Activated CD4-positive, alpha-beta T cell treated with anti-CD3 and anti-CD28 coated beads, Interleukin-2, amount 10 ng/mL, durations not matched to agents 24 days and 14 days (primary cell): ENCODE measurements at regions of chr6 and their contacts with region 1.

Region 1: DNA sequence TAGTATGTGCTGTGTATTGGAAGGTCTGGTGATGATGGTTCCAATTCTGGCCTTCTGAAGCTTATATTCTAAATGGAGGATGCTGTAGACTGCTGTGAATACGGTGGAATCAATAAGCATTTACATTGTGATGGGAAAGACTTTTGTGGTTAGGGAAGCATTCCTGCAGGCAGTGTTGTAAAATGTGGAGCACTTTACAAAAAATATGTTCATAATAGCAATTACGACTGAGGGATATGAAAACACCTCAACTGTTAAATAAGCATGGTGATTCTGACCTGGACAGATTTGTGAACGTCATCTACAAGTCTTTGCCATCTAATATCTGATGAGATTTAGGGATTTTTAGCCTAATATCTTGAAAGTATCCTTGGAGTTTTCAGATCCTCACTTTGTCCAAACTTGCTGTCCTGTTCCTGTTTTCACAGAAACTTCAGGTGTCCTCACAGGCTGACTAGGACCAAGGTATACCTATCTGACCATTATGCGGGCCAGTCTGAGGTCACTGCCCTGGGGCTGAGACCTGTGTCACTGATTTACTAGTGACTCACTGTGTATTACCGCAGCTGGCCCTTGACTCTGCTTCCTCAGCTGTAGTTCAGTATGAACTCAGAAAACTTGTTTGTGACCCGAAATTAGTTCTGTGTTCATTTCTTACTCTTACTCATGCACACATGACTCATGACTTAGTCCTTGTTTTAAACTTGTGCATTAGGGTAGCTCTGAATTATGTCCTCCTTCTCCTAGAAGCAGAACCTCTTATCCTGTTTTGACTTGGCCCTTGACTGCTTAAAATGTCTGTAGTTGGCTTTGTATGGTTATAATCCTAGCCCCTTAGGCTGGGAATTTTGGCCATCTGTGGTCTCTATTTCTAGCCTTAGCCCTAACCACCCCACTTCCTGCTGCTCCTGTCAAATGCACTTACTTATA is 343.0 kb downstream of the CDKAL1 start:
- DNase-seq: peak; percentile 60
- H3K4me3 Mint-ChIP-seq: no peak overlapping the region
- H3K27ac Mint-ChIP-seq: peak overlapping the region; percentile 42
- H3K4me1 Mint-ChIP-seq: peaks cover 13% of the 10 kb centered on the region
- H3K27me3 Mint-ChIP-seq: no peaks in the 10 kb centered on the region

Region 2: DNA sequence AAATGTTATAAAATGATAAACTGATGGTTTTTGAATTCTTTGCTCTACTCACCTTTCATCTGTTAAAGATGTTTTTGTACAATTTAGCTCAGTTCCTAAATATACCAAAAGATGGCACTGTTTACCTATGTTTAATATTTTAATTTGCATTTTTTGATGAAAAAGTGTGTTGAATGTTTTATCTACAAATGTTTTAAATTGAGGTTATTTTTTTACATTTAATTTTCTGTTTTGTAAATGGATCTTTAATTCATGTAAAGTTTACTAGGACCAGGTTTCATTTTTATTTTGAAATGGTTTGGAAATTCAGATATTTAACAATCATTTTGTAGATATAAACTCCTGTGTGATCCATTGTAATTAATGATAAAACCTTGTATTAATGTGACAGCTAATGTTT is 313.0 kb before region 1 on chr6:
- intact Hi-C with region 1: loop called (anchors 5 kb)
- DNase-seq: no peak
- H3K4me3 Mint-ChIP-seq: no peak overlapping the region
- H3K27ac Mint-ChIP-seq: no peak overlapping the region
- H3K4me1 Mint-ChIP-seq: peaks cover 8% of the 10 kb centered on the region
- H3K27me3 Mint-ChIP-seq: no peaks in the 10 kb centered on the region

Region 3: DNA sequence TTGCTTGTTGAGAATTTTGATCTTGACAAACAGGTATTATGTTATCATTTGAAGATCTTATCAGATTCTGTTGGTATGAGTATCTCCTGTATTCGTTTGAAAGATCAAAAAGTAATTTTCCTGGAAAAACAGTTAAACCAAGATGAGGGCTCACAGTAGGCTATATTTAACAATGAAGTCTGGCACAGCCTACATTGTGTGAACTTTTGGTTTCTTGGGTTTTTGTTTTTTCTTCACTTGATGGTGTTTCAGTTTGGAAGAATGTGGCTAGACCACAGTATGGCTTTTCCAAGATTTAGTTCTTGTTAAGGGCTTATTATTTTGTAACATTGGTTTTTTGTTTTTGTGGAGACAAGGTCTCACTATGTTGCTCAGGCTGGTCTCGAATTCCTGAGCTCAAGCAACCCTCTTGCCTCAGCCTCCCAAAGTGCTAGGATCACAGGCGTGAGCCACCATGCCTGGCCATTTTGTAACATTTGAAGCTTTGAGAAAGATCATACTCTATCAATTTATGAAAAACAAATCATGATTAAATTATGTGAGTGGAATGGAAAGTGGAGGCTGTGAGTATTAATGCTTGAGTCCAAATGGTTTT is 36.5 kb before region 1 on chr6:
- intact Hi-C with region 1: no loop called
- DNase-seq: no peak
- H3K4me3 Mint-ChIP-seq: no peak overlapping the region
- H3K27ac Mint-ChIP-seq: no peak overlapping the region
- H3K4me1 Mint-ChIP-seq: peaks cover 29% of the 10 kb centered on the region
- H3K27me3 Mint-ChIP-seq: no peaks in the 10 kb centered on the region

Region 4: DNA sequence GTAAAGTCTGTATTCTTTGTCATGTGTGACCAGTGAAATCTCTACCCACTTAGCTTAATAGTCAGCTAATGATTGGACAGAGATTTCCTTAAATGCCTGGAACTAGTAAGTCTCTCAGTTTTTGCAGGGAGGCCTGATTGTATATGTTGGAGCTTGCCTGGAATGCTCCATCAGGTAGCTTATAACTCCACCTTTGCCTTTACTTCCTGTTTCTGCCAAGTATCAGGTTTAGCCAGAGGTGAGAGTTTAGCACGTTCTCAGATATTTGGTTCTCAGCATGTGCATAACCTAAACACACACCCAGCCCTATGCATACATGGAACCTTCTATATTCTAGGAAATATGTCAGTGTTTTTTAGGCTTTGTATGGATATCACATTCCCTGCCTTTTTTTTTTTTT is 92.3 kb after region 1 on chr6:
- intact Hi-C with region 1: no loop called
- DNase-seq: no peak
- H3K4me3 Mint-ChIP-seq: no peak overlapping the region
- H3K27ac Mint-ChIP-seq: no peak overlapping the region
- H3K4me1 Mint-ChIP-seq: no peaks in the 10 kb centered on the region
- H3K27me3 Mint-ChIP-seq: no peaks in the 10 kb centered on the region

Region 5: DNA sequence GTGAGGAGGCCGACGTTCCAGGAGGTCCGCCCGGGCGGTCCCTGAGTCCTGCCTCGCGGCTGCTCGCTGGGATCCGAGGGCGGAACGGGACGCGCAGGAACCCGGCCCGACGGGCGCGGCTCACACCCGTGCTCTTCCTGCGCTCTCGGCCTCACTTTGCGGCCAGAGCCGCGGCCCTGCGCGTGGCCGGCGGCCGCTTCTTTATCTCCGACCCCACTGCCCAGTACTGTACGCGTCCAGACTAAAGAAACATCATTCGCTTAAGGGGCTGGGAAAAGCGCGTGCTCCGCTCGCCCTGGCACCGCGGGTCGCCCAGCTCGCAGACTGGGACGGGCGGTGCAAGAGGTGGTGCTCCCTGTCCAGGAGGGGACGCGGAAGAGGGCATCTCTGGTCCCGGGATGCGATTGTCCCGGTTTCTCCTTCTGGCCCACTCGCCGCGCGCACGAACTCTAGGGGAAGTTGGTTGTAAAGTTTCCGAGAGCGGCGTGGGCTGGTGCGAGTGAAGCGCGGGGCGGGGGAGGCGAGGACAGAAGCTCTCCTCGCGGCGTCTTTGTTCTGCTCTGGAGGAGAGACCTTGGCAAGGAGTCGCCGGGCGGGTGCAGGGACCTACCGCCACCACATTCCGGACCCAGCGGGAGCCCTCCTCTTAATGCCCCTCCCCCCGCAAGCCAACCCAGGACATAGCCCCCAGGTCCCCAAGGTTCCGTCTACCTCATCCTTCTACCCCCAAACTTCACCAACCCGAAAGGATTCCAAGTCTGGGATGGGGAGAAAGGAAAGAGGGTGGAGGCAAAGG is 787.2 kb after region 1 on chr6:
- intact Hi-C with region 1: loop called (anchors 10 kb)
- DNase-seq: peak; percentile 57
- H3K4me3 Mint-ChIP-seq: peak overlapping the region; percentile 68
- H3K27ac Mint-ChIP-seq: no peak overlapping the region
- H3K4me1 Mint-ChIP-seq: peaks cover 24% of the 10 kb centered on the region
- H3K27me3 Mint-ChIP-seq: peaks cover 63% of the 10 kb centered on the region